ENCODE measurements at regions of chrX and their contacts with region 1.

Region 1: DNA sequence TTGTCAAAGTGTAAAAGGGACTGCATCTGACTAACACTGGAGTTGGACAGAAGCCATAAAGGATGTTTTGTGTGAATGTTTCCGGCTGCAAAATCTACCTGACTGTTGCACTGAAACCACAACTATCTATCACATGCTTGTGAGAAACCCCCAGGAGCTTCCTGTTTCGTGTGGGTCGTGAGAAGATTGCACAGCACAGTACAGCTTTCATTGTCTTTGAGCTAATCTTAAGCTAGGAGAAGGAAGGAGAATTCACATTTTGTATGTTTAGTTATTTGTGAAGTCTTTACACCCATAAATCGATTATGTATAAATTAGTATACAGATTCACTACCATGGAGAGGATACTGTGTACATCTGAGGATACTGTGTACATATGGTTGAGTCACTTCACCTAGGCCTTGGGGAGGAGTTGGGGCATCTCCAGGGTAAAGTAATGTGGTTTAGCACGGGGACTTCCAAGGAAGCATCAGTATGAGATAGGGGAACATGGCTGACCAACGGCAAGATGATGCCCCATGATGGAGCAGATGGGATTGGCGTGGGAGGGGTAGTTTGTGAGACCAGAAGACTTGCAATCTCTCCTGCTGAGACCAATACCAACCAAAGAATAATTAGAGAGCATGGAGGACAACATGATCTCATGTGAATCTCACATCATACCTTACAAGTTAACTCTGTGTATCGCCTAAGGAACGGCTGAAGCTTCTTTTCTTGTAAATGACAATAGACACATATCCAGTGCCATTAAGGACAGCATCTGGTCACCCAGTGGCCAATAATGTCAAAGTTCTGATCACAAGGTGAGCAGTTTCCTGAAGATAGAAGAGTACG is 43.1 kb upstream of the FAM9C start:
- DNase-seq: peak; percentile 86 to 93 (median 90)
- H3K4me3 ChIP-seq: peak overlapping the region in 1 of 2 donors; percentile 21
- H3K4me3 Mint-ChIP-seq: peak overlapping the region; percentile 72 to 87 (median 76)
- H3K27ac ChIP-seq: peak overlapping the region; percentile 94
- H3K27ac Mint-ChIP-seq: peak overlapping the region; percentile 95 to 99 (median 97)
- H3K4me1 ChIP-seq: peaks cover 98% of the 10 kb centered on the region
- H3K4me1 Mint-ChIP-seq: peaks cover 54 to 99% (median 77%) of the 10 kb centered on the region in 4 donors
- H3K27me3 ChIP-seq: no peaks in the 10 kb centered on the region
- H3K27me3 Mint-ChIP-seq: no peaks in the 10 kb centered on the region

Region 2: GRCh38 chrX:12843668-12844279 is 243.8 kb before region 1 on chrX:
- CTCF ChIA-PET with region 1: no interaction called
- POLR2A ChIA-PET with region 1: no interaction called
- intact Hi-C with region 1: no loop called
- DNase-seq: no peak
- H3K4me3 ChIP-seq: no peak overlapping the region
- H3K4me3 Mint-ChIP-seq: peak overlapping the region; percentile 33 to 80 (median 66)
- H3K27ac ChIP-seq: no peak overlapping the region
- H3K27ac Mint-ChIP-seq: peak overlapping the region in 6 of 7 donors; percentile 5 to 77 (median 26)
- H3K4me1 ChIP-seq: peaks cover 4% of the 10 kb centered on the region
- H3K4me1 Mint-ChIP-seq: peaks cover 0 to 7% (median 5%) of the 10 kb centered on the region in 4 donors
- H3K27me3 ChIP-seq: no peaks in the 10 kb centered on the region
- H3K27me3 Mint-ChIP-seq: no peaks in the 10 kb centered on the region

Region 3: GRCh38 chrX:12929701-12930100 is 157.8 kb before region 1 on chrX:
- CTCF ChIA-PET with region 1: no interaction called
- POLR2A ChIA-PET with region 1: no interaction called
- intact Hi-C with region 1: no loop called
- DNase-seq: no peak
- H3K4me3 ChIP-seq: no peak overlapping the region
- H3K4me3 Mint-ChIP-seq: no peak overlapping the region
- H3K27ac ChIP-seq: no peak overlapping the region
- H3K27ac Mint-ChIP-seq: no peak overlapping the region
- H3K4me1 ChIP-seq: no peaks in the 10 kb centered on the region
- H3K4me1 Mint-ChIP-seq: no peaks in the 10 kb centered on the region
- H3K27me3 ChIP-seq: no peaks in the 10 kb centered on the region
- H3K27me3 Mint-ChIP-seq: peaks cover 1 to 2% of the 10 kb centered on the region in 2 donors

Region 4: GRCh38 chrX:12974796-12975669 is 112.5 kb before region 1 on chrX and contains the start of gene TMSB4X:
- CTCF ChIA-PET with region 1: interaction called, 172 read pairs
- POLR2A ChIA-PET with region 1: interaction called, 1,769 read pairs
- intact Hi-C with region 1: loop called (anchors 1 kb)
- DNase-seq: peak; percentile 81 to 85 (median 83)
- H3K4me3 ChIP-seq: peak within 1 kb of the TSS; percentile 84 to 85
- H3K4me3 Mint-ChIP-seq: peak within 1 kb of the TSS; percentile 92 to 99 (median 98)
- H3K27ac ChIP-seq: peak within 1 kb of the TSS; percentile 84
- H3K27ac Mint-ChIP-seq: peak within 1 kb of the TSS; percentile 89 to 99 (median 97)
- H3K4me1 ChIP-seq: peaks cover 26% of the 10 kb centered on the region
- H3K4me1 Mint-ChIP-seq: peaks cover 16 to 57% (median 38%) of the 10 kb centered on the region in 4 donors
- H3K27me3 ChIP-seq: no peaks in the 10 kb centered on the region
- H3K27me3 Mint-ChIP-seq: no peaks in the 10 kb centered on the region
- total RNA-seq, gene TMSB4X: 4,851 to 5,116 TPM

Region 5: DNA sequence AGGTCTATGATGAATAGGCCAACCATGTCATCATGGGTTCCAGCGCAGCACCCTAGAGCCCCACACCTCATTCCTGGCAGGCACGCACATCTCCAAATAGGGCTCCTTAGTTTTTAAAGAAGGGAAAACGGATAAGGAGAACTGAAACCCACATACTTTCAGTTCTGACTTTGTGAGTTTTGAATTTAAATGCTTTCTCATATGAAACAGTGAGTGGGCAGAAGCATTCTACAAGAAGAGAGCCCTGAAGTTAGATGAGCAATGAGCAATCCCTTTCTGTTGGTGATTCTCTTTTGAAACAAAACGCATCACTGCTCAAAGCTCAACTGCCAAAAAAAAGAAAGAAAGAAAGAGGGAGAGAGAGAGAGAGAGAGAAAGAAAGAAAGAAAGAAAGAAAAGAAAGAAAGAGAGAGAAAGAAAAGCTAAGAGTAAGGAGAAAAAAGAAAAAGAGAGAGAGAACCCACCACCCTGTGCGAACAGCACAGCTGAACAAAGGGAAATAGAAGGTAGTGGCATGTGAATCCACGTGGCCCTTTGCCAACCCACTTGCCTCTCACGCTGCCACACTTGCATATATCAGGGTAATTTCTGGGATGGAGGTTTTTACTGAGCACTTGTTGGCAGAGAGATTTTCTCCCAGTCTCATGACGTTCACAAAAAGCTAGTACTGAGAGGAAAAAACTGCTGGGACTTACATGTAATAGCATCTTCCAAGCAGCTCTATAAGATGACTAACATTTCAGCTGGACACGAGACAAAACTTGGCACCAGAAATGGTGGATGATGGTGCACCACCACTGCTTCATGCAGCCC is 81.7 kb before region 1 on chrX:
- CTCF ChIA-PET with region 1: interaction called, 21 read pairs
- POLR2A ChIA-PET with region 1: interaction called, 101 read pairs
- intact Hi-C with region 1: no loop called
- DNase-seq: no peak
- H3K4me3 ChIP-seq: no peak overlapping the region
- H3K4me3 Mint-ChIP-seq: peak overlapping the region; percentile 67 to 89 (median 77)
- H3K27ac ChIP-seq: peak overlapping the region; percentile 50
- H3K27ac Mint-ChIP-seq: peak overlapping the region; percentile 92 to 99 (median 96)
- H3K4me1 ChIP-seq: peaks cover 81% of the 10 kb centered on the region
- H3K4me1 Mint-ChIP-seq: peaks cover 43 to 75% (median 62%) of the 10 kb centered on the region in 4 donors
- H3K27me3 ChIP-seq: no peaks in the 10 kb centered on the region
- H3K27me3 Mint-ChIP-seq: no peaks in the 10 kb centered on the region

Region 6: GRCh38 chrX:13043144-13043543 is 44.4 kb before region 1 on chrX:
- CTCF ChIA-PET with region 1: interaction called, 11 read pairs
- POLR2A ChIA-PET with region 1: interaction called, 7 read pairs
- intact Hi-C with region 1: no loop called
- DNase-seq: no peak
- H3K4me3 ChIP-seq: no peak overlapping the region
- H3K4me3 Mint-ChIP-seq: no peak overlapping the region
- H3K27ac ChIP-seq: no peak overlapping the region
- H3K27ac Mint-ChIP-seq: no peak overlapping the region
- H3K4me1 ChIP-seq: peaks cover 31% of the 10 kb centered on the region
- H3K4me1 Mint-ChIP-seq: peaks cover 14 to 45% (median 27%) of the 10 kb centered on the region in 4 donors
- H3K27me3 ChIP-seq: no peaks in the 10 kb centered on the region
- H3K27me3 Mint-ChIP-seq: no peaks in the 10 kb centered on the region

Region 7: GRCh38 chrX:13151828-13152510 is 64.4 kb after region 1 on chrX:
- CTCF ChIA-PET with region 1: interaction called, 7 read pairs
- POLR2A ChIA-PET with region 1: interaction called, 11 read pairs
- intact Hi-C with region 1: loop called (anchors 2 kb)
- DNase-seq: peak; percentile 76 to 89 (median 84)
- H3K4me3 ChIP-seq: no peak overlapping the region
- H3K4me3 Mint-ChIP-seq: peak overlapping the region; percentile 32 to 73 (median 58)
- H3K27ac ChIP-seq: peak overlapping the region; percentile 51
- H3K27ac Mint-ChIP-seq: peak overlapping the region; percentile 88 to 97 (median 94)
- H3K4me1 ChIP-seq: peaks cover 22% of the 10 kb centered on the region
- H3K4me1 Mint-ChIP-seq: peaks cover 10 to 34% (median 17%) of the 10 kb centered on the region in 4 donors
- H3K27me3 ChIP-seq: no peaks in the 10 kb centered on the region
- H3K27me3 Mint-ChIP-seq: no peaks in the 10 kb centered on the region

Region 8: GRCh38 chrX:13653022-13653693 is 565.6 kb after region 1 on chrX and contains the start of gene TCEANC:
- CTCF ChIA-PET with region 1: no interaction called
- POLR2A ChIA-PET with region 1: no interaction called
- intact Hi-C with region 1: loop called (anchors 5 kb)
- DNase-seq: peak; percentile 95 to 97 (median 96)
- H3K4me3 ChIP-seq: peak within 1 kb of the TSS; percentile 47 to 75
- H3K4me3 Mint-ChIP-seq: peak within 1 kb of the TSS; percentile 91 to 97 (median 96)
- H3K27ac ChIP-seq: peak within 1 kb of the TSS; percentile 94
- H3K27ac Mint-ChIP-seq: peak within 1 kb of the TSS; percentile 96 to 99 (median 99)
- H3K4me1 ChIP-seq: peaks cover 22% of the 10 kb centered on the region
- H3K4me1 Mint-ChIP-seq: peaks cover 11 to 33% (median 18%) of the 10 kb centered on the region in 4 donors
- H3K27me3 ChIP-seq: no peaks in the 10 kb centered on the region
- H3K27me3 Mint-ChIP-seq: no peaks in the 10 kb centered on the region
- total RNA-seq, gene TCEANC: 14.6 to 16.3 TPM